H1 (cell line): ENCODE measurements at regions of chr12 and their contacts with region 1.

Region 1: DNA sequence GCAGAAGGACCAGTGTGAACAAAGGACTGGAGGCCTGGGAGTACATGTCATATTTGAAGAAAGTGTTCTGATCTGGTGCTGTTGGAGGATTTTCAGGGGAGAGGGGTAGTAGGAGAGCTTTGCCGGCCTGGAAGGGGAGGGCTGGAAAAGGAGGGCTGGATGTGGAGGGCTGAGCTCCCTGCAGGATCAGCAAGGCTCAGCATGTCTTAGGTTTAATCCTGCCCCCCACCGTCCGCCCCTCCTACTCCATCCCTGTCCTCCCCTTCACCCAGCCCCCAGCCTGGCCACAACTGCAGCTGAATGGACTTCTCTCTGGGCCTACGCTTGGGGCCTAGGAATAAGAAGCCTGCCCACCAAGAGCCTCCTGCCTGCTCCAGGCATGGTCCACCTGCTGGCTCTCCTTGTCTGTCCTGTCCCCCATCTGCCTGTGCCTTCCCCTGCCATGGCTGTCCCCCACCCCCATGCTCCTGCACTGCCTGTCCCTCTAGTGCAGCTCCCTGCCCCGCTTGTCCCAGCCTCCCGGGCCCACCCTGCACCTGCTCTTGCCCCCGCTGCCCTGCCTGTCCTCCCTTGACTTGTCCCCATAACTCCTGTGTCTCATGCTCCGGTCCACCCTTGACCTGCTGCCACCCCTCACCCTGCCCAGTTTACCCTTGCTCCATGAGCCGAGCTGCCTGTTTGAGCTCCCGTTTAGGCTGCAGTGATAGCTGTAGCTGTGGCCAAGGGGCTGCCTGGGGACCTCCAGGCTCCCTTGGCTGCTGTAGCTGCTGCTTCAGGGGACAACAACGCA is 9.8 kb upstream of the RARG start:
- DNase-seq: no peak
- H3K4me3 ChIP-seq: no peak overlapping the region
- H3K27ac ChIP-seq: no peak overlapping the region
- H3K4me1 ChIP-seq: peaks cover 0 to 13% (median 8%) of the 10 kb centered on the region in 4 experiments; a peak in 6 of 7 replicates
- H3K27me3 ChIP-seq: no peaks in the 10 kb centered on the region; a peak in 1 of 7 replicates
- CTCF ChIP-seq: no peak
- EP300 ChIP-seq: no peak
- POLR2A ChIP-seq: no peak
- RAD21 ChIP-seq: no peak

Region 2: GRCh38 chr12:53220801-53221202 is 21.0 kb before region 1 on chr12:
- CTCF ChIA-PET with region 1: interaction called, 535 read pairs
- POLR2A ChIA-PET with region 1: interaction called, 18 read pairs
- DNase-seq: peak in 1 of 2 experiments; percentile 92
- H3K4me3 ChIP-seq: peak overlapping the region; percentile 76 to 97 (median 86)
- H3K27ac ChIP-seq: no peak overlapping the region
- H3K4me1 ChIP-seq: peaks cover 39 to 69% (median 56%) of the 10 kb centered on the region in 4 experiments
- H3K27me3 ChIP-seq: peaks cover 0 to 3% (median 0%) of the 10 kb centered on the region in 4 experiments; a peak in 1 of 7 replicates
- CTCF ChIP-seq: no peak
- EP300 ChIP-seq: no peak
- POLR2A ChIP-seq: no peak
- RAD21 ChIP-seq: no peak

Region 3: DNA sequence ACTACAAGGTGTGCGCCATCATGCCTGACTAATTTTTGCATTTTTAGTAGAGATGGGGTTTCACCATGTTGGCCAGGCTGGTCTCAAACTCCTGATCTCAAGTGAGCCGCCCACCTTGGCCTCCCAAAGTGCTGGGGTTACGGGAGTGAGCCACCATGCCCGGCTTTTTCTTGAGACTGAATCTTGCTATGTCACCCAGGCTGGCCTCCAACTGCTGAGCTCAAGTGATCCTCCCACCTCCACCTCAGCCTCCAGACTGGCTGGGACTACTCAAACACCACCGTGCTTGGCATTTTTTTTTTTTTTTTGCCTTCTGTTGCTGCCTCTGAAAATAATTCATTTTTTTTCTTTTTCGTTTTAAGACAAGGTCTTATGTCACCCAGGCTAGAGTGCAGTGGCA is 18.1 kb after region 1 on chr12:
- CTCF ChIA-PET with region 1: interaction called, 68 read pairs
- POLR2A ChIA-PET with region 1: interaction called, 4 read pairs
- DNase-seq: no peak
- H3K4me3 ChIP-seq: no peak overlapping the region
- H3K27ac ChIP-seq: no peak overlapping the region
- H3K4me1 ChIP-seq: no peaks in the 10 kb centered on the region
- H3K27me3 ChIP-seq: no peaks in the 10 kb centered on the region
- CTCF ChIP-seq: no peak
- EP300 ChIP-seq: no peak
- POLR2A ChIP-seq: no peak
- RAD21 ChIP-seq: no peak

Region 4: GRCh38 chr12:53287741-53288216 is 46.0 kb after region 1 on chr12:
- CTCF ChIA-PET with region 1: interaction called, 17 read pairs
- POLR2A ChIA-PET with region 1: interaction called, 3 read pairs
- DNase-seq: peak in 1 of 2 experiments; percentile 81
- H3K4me3 ChIP-seq: no peak overlapping the region
- H3K27ac ChIP-seq: no peak overlapping the region
- H3K4me1 ChIP-seq: no peaks in the 10 kb centered on the region
- H3K27me3 ChIP-seq: no peaks in the 10 kb centered on the region
- CTCF ChIP-seq: peak; percentile 80 to 86 (median 85)
- EP300 ChIP-seq: no peak
- POLR2A ChIP-seq: no peak
- RAD21 ChIP-seq: peak; percentile 74 to 81